ACHN (cell line): ENCODE measurements at regions of chr1 and their contacts with region 1.

Region 1: DNA sequence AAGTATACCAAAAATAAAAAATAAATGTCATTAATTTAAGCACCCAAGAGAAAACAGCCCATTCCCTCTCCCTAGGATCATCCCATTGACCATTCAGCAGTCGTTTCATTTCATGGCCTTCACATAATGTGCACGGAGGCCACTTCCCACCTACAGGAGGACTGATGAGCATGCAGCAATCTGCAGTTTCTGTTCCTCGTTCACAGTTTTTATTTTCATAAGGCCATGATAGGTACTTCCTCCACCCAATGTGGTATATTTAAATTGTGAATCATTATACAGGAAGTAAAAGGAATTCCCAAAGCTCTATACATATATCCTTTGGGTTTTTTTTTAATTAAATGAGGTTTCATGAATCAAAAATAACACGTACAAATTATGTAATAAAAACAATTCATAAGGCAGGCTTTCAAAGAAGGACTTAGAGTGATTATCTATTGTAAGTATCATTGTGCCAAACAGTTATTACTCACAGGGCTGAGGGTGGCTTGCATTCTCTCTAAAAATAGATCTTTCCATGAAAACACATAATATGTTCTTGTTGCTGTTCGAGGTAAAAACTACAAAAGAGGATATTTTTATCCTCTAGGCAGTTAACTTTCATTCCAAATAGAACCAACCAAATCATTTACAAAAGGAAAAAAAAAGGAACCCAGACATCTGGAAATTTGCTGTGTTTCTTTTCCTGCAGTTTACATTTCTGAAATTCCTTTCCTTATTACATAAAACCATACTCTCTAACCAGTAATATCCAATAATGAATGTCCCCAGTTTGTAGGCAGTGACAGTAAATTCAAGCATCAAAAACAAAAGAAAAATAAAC is 27.5 kb upstream of the SLC44A3 start:
- DNase-seq: peak; percentile 57

Region 2: DNA sequence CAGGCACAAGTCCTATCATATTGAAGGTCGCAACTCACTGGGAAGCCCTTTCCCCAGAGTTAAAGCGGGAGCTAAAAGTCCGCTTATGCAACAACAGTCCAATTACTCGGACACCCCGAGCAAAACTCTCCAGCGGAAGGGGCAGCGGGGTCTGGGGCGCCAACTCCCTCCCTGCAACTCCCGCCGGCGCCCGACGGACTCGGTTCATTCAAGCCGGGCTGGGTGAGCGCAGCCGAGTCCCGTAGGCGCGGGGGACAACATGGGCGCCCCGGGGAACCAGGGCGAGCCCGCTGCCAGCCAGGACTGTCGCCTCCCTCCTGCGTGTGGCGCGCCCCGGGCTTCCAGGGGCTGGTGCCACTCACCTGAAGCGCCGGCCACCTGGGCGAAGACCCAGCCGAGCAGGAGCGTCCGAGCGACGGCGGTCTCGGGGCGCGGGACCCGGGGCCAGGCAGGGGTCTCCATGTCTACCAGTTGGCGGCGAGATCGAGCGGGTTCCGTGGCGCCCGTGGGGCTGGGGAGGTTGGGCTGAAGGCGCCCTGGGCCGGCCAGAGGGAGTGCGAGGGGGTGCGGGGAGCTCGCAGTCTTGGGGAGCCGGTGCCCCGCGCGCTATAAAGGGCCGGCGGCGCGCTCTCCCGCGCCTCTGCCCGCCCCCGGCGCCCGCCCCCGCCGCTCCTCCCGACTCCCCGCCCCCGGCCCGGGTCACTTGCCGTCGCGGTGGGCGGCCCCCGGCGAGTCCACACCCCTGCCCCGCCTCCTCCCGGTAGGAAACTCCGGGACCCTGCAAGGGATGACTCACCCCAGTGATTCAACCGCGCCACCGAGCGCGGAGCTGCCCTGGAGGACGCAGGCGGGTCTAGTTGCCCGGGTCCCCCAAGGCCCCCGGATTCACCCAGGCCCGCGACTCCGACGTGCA is 251.3 kb before region 1 on chr1 and contains the start of gene F3:
- in situ Hi-C with region 1: loop called (anchors 25 kb)
- DNase-seq: peak; percentile 86

Region 3: GRCh38 chr1:94669203-94669602 is 123.5 kb before region 1 on chr1:
- in situ Hi-C with region 1: no loop called
- DNase-seq: no peak

Region 4: DNA sequence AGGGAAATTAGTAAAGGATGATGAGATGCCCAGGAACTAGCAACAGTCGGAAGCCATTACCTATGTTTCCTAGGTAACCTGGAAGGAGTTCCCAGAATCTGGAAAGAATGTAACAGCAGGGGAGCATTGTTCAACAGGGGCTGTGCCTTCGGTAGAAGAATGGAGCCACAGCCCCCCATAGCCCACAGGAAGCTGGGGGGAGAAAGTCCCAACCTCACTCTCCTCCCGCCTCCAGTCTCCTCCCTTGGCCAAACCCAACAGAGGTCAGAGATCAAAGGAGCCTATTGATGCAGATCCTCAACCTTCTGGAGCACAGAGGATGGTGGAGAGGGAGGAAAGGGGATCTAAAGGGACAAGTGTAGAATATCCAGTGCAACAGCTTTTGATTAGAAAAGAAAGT is 104.0 kb before region 1 on chr1:
- in situ Hi-C with region 1: no loop called
- DNase-seq: no peak